ENCODE measurements at regions of chr17 and their contacts with region 1.

Region 1: DNA sequence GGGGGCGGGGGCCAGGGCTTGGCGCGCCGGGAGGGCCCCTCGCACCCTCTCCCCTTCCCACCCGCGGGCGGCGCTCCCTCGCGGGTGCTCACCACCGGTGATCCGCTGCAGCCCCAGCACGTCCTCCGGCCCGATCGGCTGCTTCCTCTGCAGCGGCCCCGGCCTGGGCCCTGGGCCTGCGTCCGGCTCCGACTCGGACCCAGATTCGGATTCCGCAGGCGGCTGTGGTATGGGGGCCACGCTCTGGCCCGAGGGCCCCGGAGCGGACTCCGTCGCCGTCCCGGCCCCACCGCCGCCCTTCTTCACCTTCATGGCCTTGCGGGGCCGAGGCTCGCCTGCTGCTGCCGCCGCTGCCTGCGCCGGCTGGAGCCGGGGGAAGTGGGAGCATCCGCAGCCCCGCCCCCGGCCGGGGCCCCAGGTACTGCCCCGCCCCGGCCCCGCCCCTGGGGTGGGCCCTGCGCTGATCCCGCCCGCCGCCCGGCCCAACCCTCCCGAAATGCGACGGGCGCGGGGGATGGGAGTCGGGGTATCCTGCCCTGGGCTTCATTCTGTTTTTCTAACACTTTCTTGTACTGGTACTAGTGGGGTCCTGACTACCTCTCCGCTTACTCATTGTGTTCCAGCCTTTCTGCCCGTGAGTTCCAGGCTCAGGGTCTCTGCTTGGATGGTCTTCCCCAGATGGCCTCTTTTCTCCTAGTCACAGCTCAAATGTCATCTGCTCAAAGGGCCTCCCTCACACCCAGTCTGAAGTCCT is at the start of gene UNC119:
- DNase-seq: peak in 1 of 2 experiments; percentile 88
- H3K4me3 ChIP-seq: peak within 1 kb of the TSS; percentile 75 to 89 (median 80)
- H3K27ac ChIP-seq: no peak within 1 kb of the TSS; the same call in 1 of the 2 replicates
- H3K4me1 ChIP-seq: peaks cover 0 to 15% (median 2%) of the 10 kb centered on the region in 4 experiments; a peak in 3 of 7 replicates
- H3K27me3 ChIP-seq: no peaks in the 10 kb centered on the region; a peak in 1 of 7 replicates
- CTCF ChIP-seq: no peak
- EP300 ChIP-seq: no peak
- POLR2A ChIP-seq: peak in 1 of 2 experiments; percentile 69; a peak in 2 of 3 replicates
- RAD21 ChIP-seq: no peak
- total RNA-seq, gene UNC119: 43.5 and 44.1 TPM in 2 replicates

Region 2: GRCh38 chr17:28446728-28447395 is 105.6 kb before region 1 on chr17:
- CTCF ChIA-PET with region 1: no interaction called
- POLR2A ChIA-PET with region 1: no interaction called
- DNase-seq: no peak
- H3K4me3 ChIP-seq: no peak overlapping the region
- H3K27ac ChIP-seq: no peak overlapping the region
- H3K4me1 ChIP-seq: no peaks in the 10 kb centered on the region
- H3K27me3 ChIP-seq: no peaks in the 10 kb centered on the region
- CTCF ChIP-seq: no peak
- EP300 ChIP-seq: no peak
- POLR2A ChIP-seq: no peak
- RAD21 ChIP-seq: no peak

Region 3: GRCh38 chr17:28494445-28495188 is 57.8 kb before region 1 on chr17:
- CTCF ChIA-PET with region 1: interaction called, 547 read pairs
- POLR2A ChIA-PET with region 1: interaction called, 5 read pairs
- DNase-seq: peak; percentile 41 to 96
- H3K4me3 ChIP-seq: no peak overlapping the region
- H3K27ac ChIP-seq: no peak overlapping the region
- H3K4me1 ChIP-seq: peaks cover 0 to 19% (median 8%) of the 10 kb centered on the region in 4 experiments; a peak in 6 of 7 replicates
- H3K27me3 ChIP-seq: no peaks in the 10 kb centered on the region
- CTCF ChIP-seq: peak; percentile 93 to 97 (median 93)
- EP300 ChIP-seq: no peak
- POLR2A ChIP-seq: no peak
- RAD21 ChIP-seq: peak; percentile 98 to 99

Region 4: DNA sequence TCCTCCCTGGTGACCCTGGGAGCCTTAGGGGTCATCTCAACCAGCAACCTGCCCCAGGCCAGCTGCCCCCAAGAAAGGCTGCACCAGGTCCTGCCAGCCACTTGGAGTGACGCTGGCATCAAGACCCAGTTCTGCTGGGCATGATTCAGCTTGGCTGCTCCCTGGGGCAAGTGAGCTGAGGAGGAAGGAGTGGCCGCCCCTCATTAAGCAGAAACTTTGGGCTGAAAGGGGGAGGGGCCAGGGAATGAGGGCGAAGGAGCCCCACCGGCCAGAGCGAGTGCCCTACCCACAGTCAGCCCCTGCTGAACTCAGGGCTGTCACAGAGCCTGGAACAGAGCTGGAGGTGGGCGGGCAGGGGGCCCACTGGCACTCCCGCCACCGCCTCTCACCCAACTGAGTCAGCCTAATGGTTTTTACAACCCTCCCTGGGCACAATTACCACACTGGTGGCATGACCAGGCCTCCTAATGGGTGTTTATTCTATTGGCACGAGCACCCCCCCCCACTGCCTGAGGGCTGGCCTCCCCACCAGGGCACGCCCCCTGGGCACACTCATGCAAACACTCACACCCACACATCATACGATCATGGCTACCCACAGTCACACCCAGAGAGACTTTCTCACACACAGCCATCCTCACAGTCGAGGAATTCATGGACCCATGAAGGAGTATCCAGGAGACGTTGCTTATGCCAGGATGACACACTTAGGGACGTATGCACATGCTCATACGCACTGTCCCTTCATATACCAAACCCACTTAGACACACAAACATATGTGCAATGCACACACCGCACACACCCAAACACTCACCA is 19.2 kb before region 1 on chr17:
- CTCF ChIA-PET with region 1: interaction called, 80 read pairs
- POLR2A ChIA-PET with region 1: interaction called, 3 read pairs
- DNase-seq: no peak
- H3K4me3 ChIP-seq: no peak overlapping the region
- H3K27ac ChIP-seq: no peak overlapping the region
- H3K4me1 ChIP-seq: peaks cover 0 to 5% (median 0%) of the 10 kb centered on the region in 4 experiments; a peak in 2 of 7 replicates
- H3K27me3 ChIP-seq: no peaks in the 10 kb centered on the region
- CTCF ChIP-seq: no peak
- EP300 ChIP-seq: no peak
- POLR2A ChIP-seq: no peak
- RAD21 ChIP-seq: no peak

Region 5: DNA sequence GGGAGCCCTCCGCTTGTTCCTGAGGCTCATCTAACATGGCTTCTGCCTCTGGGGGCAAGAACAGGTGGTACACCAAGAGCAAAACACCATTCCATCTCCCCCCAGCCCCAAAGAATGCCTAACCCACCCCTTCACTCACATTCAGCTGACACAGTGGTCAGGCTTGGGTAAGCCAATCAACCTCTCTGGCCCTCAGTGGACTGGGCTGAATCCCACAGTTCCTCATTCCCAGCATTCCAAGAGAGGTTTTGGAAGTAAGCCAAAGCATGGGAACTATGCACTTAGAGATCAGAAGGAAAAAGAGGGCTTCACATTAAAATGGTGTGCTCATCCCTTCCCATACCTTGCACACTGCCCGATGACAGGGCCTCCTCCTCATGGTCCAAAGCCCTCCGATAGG is 11.1 kb after region 1 on chr17:
- CTCF ChIA-PET with region 1: interaction called, 58 read pairs
- POLR2A ChIA-PET with region 1: interaction called, 23 read pairs
- DNase-seq: no peak
- H3K4me3 ChIP-seq: no peak overlapping the region
- H3K27ac ChIP-seq: no peak overlapping the region
- H3K4me1 ChIP-seq: no peaks in the 10 kb centered on the region
- H3K27me3 ChIP-seq: no peaks in the 10 kb centered on the region
- CTCF ChIP-seq: no peak
- EP300 ChIP-seq: no peak
- POLR2A ChIP-seq: no peak
- RAD21 ChIP-seq: no peak

Region 6: GRCh38 chr17:28576758-28577465 is 24.5 kb after region 1 on chr17 and contains the start of gene ALDOC:
- CTCF ChIA-PET with region 1: interaction called, 58 read pairs
- POLR2A ChIA-PET with region 1: interaction called, 23 read pairs
- DNase-seq: peak; percentile 97 to 99
- H3K4me3 ChIP-seq: peak within 1 kb of the TSS; percentile 12 to 54 (median 20); a peak in 5 of 8 replicates
- H3K27ac ChIP-seq: no peak within 1 kb of the TSS
- H3K4me1 ChIP-seq: peaks cover 2 to 9% (median 5%) of the 10 kb centered on the region in 4 experiments; a peak in 6 of 7 replicates
- H3K27me3 ChIP-seq: peaks cover 0 to 8% (median 4%) of the 10 kb centered on the region in 4 experiments; a peak in 4 of 7 replicates
- CTCF ChIP-seq: no peak
- EP300 ChIP-seq: no peak
- POLR2A ChIP-seq: peak; percentile 80 to 84
- RAD21 ChIP-seq: no peak
- total RNA-seq, gene ALDOC: 51.3 and 51.6 TPM in 2 replicates

Measured in H1 (cell line).